PC-3 (cell line): ENCODE measurements at regions of chr2 and their contacts with region 1.

Region 1: DNA sequence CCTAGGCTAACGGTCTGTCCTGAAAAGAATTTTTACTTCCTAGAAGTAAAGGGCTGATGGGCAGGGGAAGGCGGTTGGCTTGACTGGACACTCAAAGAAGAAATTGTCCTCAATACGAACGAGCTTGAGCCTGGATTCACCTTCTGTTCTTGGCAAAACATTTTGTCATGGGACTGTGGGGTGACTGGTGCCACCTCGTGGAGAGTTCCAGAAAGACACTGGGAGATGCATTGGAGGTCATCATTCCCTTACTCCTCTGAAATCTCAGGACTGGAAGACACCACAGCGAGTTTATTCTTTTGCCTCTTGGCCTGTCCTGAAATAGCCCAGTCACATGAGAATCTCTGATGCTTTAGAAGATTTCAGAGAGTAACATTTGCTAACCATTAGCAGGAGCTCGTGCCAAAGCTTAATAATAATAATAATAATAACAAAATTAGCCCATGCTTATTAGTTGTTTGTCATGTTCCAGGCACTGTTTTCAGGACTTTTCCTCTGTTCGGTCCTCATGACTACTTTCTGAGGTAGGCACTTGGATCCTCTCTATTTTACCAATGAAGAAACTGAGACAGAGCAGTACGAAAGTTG is 44.5 kb downstream of the TMEM182 start:
- DNase-seq: peak; percentile 78
- ATAC-seq: peak; percentile 84
- H3K4me3 ChIP-seq: no peak overlapping the region
- H3K27ac ChIP-seq: no peak overlapping the region
- H3K4me1 ChIP-seq: peaks cover 7% of the 10 kb centered on the region; the same call in 1 of the 2 replicates
- H3K27me3 ChIP-seq: no peaks in the 10 kb centered on the region
- CTCF ChIP-seq: peak; percentile 83

Region 2: GRCh38 chr2:102753563-102754159 is 52.7 kb before region 1 on chr2:
- CTCF ChIA-PET with region 1: interaction called, 23 read pairs
- POLR2A ChIA-PET with region 1: no interaction called
- intact Hi-C with region 1: loop called (anchors 1 kb)
- DNase-seq: peak; percentile 69
- ATAC-seq: peak; percentile 71
- H3K4me3 ChIP-seq: no peak overlapping the region
- H3K27ac ChIP-seq: no peak overlapping the region
- H3K4me1 ChIP-seq: no peaks in the 10 kb centered on the region
- H3K27me3 ChIP-seq: no peaks in the 10 kb centered on the region
- CTCF ChIP-seq: peak; percentile 89